ENCODE measurements at regions of chr2 and their contacts with region 1.

Region 1: DNA sequence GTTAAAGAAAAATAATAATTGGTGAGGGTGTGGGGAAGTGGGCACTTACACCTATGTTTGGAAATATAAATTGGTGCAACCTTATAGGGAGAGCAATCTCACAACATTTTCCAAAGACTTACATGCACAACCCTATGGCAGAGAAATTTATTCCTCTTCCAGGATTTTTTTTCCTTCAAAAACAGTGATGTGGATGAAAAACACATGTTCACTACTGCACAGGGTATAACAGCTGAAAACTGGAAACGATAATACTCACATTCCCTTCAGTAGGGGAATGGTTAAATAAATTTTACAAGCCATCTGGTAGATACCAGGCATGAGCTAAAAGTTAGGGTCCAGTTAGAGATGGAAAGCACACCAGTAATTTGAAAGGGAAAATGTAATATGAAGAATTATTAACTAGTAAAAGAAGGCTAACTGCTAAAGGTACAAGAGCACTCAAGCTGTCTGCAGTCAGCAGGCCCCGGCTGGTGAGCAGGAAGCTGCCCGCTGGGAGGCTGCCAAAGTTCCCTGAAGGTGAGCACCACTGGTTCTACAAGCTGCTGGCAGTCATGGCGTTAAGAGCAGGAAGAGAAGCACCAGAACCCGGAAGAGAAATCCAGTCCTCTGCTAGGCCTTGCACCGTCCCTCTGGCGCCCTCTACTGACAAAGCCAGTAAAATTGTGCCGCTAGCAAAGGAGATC is 28.4 kb upstream of the CASP8 start:
- DNase-seq: peak; percentile 90
- H3K4me3 ChIP-seq: no peak overlapping the region
- H3K27ac ChIP-seq: no peak overlapping the region
- H3K4me1 ChIP-seq: peaks cover 25% of the 10 kb centered on the region
- H3K27me3 ChIP-seq: no peaks in the 10 kb centered on the region
- CTCF ChIP-seq: peak; percentile 96

Region 2: GRCh38 chr2:200713003-200713703 is 518.8 kb before region 1 on chr2:
- CTCF ChIA-PET with region 1: interaction called, 3 read pairs
- dilution Hi-C with region 1: no loop called
- in situ Hi-C with region 1: no loop called
- intact Hi-C with region 1: loop called (anchors 1 kb)
- DNase-seq: peak; percentile 89
- H3K4me3 ChIP-seq: peak overlapping the region; percentile 34
- H3K27ac ChIP-seq: peak overlapping the region; percentile 59
- H3K4me1 ChIP-seq: peaks cover 9% of the 10 kb centered on the region
- H3K27me3 ChIP-seq: no peaks in the 10 kb centered on the region
- CTCF ChIP-seq: peak; percentile 84 to 91

Region 3: DNA sequence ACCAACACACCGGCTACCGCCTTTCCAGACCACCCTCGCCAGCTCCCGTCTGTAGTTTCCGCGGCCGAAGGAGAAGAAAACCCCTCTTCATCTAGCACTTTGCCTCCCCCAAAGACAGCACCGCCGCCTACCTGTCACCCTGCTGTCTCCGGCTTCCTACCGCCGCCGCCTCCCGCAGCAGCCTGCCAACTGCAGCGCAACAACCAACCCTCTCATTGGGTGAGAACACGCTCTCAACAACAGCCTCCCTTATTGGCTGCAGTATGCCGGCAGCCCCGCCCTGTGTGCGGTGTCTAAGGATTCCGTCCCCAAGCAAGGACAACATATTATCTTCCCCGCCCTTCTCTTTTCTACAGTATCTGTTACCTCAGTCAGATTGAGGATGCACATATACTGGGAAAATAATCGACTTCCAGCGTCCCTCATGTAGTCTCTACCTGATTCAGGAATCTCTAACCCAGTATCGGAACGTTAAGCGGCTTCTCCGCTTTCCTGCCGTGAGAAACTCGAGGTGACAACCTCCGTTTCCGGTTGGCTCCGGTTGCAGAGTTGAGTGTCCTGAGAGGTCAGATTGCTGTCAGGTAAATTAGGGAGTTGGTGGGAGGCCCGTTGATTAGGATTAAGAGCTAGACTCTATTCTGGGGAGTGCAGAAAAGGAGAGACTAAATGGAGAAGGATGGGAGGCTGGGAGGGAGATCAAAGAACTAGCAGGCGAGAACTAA is 160.3 kb before region 1 on chr2 and contains the starts of genes HYCC2 and NDUFB3:
- CTCF ChIA-PET with region 1: interaction called, 5 read pairs
- dilution Hi-C with region 1: no loop called
- in situ Hi-C with region 1: no loop called
- intact Hi-C with region 1: loop called (anchors 1 kb)
- DNase-seq: peak; percentile 93
- H3K4me3 ChIP-seq: peak within 1 kb of the TSS; percentile 84 to 90 (median 87)
- H3K27ac ChIP-seq: peak within 1 kb of the TSS; percentile 93
- H3K4me1 ChIP-seq: peaks cover 12% of the 10 kb centered on the region
- H3K27me3 ChIP-seq: no peaks in the 10 kb centered on the region
- CTCF ChIP-seq: peak in 1 of 2 donors; percentile 49
- total RNA-seq, gene HYCC2: 15.0 to 15.2 TPM
- total RNA-seq, gene NDUFB3: 23.7 to 84.9 TPM

Region 4: GRCh38 chr2:201257956-201258665 is 26.2 kb after region 1 on chr2:
- CTCF ChIA-PET with region 1: no interaction called
- dilution Hi-C with region 1: no loop called
- in situ Hi-C with region 1: no loop called
- intact Hi-C with region 1: loop called (anchors 1 kb)
- DNase-seq: peak; percentile 91
- H3K4me3 ChIP-seq: peak overlapping the region; percentile 50 to 57 (median 54)
- H3K27ac ChIP-seq: peak overlapping the region; percentile 96
- H3K4me1 ChIP-seq: peaks cover 24% of the 10 kb centered on the region
- H3K27me3 ChIP-seq: no peaks in the 10 kb centered on the region
- CTCF ChIP-seq: peak in 1 of 2 donors; percentile 28

Region 5: DNA sequence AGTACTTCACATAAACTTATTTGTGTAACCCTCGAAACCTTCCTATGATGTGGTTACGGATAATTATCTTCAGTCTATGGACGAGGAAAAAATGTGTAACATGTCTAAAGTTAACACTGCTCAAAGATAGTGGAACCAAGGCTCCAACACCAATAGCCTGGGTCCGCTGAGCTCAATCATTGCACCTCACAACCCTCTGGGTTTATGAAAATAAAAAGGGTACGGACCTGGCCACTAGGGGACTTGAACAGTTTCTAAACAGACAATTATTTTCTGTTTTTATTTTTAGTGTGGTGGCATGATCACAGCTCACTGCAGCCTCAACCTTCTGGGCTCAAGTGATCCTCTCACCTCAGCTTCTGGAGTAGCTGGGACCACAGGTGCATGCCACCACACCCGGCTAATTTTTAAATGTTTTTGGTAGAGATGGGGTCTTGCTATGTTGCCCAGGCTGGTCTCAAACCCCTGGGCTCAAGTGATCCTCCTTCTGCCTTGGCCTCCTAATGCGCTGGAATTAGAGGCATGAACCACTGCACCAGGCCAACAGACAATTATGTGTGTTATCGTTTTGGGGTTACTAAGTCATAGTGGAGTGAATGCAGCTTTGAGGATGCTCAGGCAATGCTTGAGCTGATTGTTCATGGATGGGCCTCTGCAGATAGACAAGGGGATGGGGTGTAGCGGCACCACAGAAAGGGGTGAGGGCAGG is 38.5 kb after region 1 on chr2:
- CTCF ChIA-PET with region 1: no interaction called
- dilution Hi-C with region 1: no loop called
- in situ Hi-C with region 1: no loop called
- intact Hi-C with region 1: no loop called
- DNase-seq: no peak
- H3K4me3 ChIP-seq: no peak overlapping the region
- H3K27ac ChIP-seq: no peak overlapping the region
- H3K4me1 ChIP-seq: no peaks in the 10 kb centered on the region
- H3K27me3 ChIP-seq: no peaks in the 10 kb centered on the region
- CTCF ChIP-seq: no peak

Region 6: DNA sequence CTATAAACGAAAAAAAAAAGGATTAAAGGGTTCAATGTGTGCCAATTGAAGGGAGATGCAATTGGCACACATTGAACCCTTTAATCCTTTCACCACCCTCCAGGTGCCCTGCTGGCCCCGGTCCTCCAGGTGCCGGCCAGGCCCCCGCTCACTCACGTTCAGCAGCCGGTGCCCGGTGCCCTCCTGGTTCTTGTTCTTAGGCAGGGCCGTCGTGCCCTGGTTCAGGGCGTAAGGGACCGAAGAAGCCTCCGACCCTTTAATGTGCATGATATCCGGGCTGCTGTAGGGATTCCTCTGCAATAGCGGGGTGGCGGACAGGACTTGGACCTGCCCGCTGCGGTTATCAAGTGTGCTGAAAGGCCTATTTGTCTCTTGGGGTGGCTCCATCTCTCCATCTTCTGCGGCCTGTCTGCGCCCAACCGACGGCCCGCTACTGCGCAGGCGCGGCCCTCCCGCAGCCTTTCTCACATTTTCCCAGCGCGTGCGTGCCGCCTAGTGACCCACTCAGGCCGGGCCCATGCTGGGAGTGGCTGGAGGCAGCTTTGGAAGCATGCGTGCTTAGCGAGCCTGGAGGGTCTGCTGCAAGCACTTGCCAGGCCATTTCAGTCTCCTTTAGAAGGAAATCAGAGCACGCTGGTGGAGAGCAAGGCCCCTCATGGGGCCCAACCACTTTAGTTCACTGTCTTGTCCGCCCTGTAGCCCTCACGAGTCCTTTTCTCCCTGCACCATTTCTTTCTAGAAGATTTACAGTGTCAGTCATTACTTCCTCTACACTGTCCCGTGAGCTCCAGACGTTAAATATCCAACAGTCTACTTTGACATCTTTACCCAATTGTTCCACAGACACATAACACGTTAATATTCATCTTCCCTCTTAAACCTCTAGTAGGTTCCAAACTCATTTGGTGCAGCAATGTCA is 387.1 kb after region 1 on chr2:
- CTCF ChIA-PET with region 1: no interaction called
- dilution Hi-C with region 1: no loop called
- in situ Hi-C with region 1: loop called in 1 of 2 experiments (anchors 25 kb)
- intact Hi-C with region 1: loop called (anchors 5 kb)
- DNase-seq: no peak
- H3K4me3 ChIP-seq: peak overlapping the region in 1 of 3 experiments; percentile 10
- H3K27ac ChIP-seq: no peak overlapping the region
- H3K4me1 ChIP-seq: no peaks in the 10 kb centered on the region
- H3K27me3 ChIP-seq: no peaks in the 10 kb centered on the region
- CTCF ChIP-seq: peak in 1 of 2 donors; percentile 34

Region 7: DNA sequence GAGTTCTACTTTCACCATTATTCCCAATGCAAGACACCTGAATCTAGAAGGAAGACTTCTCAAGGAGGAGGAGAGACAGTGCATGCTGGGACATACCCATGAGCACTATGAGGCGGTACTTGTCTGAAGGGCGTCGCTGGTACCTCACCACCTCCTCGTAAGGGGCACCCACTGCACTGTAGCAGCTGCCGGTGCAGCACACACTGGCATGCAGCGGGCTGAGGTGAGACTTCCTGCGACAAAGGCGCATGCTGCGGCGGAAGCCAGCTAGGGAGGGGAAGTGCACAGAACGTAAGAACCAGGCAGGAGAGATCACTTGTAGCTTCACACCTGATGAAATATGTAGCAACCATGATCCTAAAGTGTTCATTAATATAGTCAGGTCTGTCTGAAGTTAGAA is 424.2 kb after region 1 on chr2:
- CTCF ChIA-PET with region 1: no interaction called
- dilution Hi-C with region 1: no loop called
- in situ Hi-C with region 1: no loop called
- intact Hi-C with region 1: no loop called
- DNase-seq: no peak
- H3K4me3 ChIP-seq: no peak overlapping the region
- H3K27ac ChIP-seq: no peak overlapping the region
- H3K4me1 ChIP-seq: no peaks in the 10 kb centered on the region
- H3K27me3 ChIP-seq: no peaks in the 10 kb centered on the region
- CTCF ChIP-seq: no peak

Region 8: GRCh38 chr2:202178342-202178958 is 946.5 kb after region 1 on chr2:
- CTCF ChIA-PET with region 1: no interaction called
- dilution Hi-C with region 1: no loop called
- in situ Hi-C with region 1: no loop called
- intact Hi-C with region 1: loop called (anchors 5 kb)
- DNase-seq: peak; percentile 46
- H3K4me3 ChIP-seq: no peak overlapping the region
- H3K27ac ChIP-seq: no peak overlapping the region
- H3K4me1 ChIP-seq: no peaks in the 10 kb centered on the region
- H3K27me3 ChIP-seq: no peaks in the 10 kb centered on the region
- CTCF ChIP-seq: peak; percentile 76 to 85